WTC11 (cell line): ENCODE measurements at regions of chr11 and their contacts with region 1.

Region 1: DNA sequence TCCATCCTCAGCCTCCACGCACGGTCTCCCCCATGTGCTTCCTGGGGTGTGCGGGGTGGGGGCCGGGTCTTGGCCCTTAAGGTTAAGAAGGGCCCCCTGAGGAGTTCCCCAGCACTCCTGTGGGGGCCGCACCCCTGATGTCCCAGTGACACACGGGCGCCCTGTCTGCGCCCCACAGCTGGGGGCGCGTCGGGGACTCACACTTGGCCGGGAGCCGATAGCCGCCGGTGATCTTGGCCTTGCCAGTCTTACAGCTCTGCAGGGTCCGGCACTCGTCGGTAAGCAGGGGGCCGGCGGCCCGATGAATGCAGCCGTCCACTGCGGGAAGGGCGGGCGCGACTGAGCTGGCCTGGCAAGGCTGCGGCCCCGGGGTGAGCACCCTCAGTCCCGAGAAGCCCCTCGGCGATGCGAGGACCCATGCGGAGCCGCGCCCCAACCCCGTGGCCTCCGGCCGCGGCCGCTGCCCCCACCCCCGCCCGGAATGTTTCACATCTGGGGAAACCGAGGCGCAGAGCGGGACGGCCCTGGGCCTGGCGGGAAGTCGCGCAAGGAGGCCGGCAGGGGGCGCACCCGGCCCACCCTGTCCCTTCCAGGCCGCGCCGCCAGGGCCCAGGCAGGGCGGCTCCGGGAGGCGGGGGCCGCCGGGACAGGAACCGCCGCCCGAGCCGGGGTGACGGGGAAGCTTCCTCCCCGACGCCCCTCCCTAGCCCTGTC is 13.9 kb downstream of the OTUB1 start:
- DNase-seq: peak; percentile 76
- ATAC-seq: peak; percentile 34
- H3K4me3 Mint-ChIP-seq: peak overlapping the region; percentile 64
- H3K27ac Mint-ChIP-seq: no peak overlapping the region
- H3K4me1 Mint-ChIP-seq: peaks cover 11% of the 10 kb centered on the region
- H3K27me3 Mint-ChIP-seq: peaks cover 42% of the 10 kb centered on the region
- CTCF ChIP-seq: peak; percentile 64

Region 2: DNA sequence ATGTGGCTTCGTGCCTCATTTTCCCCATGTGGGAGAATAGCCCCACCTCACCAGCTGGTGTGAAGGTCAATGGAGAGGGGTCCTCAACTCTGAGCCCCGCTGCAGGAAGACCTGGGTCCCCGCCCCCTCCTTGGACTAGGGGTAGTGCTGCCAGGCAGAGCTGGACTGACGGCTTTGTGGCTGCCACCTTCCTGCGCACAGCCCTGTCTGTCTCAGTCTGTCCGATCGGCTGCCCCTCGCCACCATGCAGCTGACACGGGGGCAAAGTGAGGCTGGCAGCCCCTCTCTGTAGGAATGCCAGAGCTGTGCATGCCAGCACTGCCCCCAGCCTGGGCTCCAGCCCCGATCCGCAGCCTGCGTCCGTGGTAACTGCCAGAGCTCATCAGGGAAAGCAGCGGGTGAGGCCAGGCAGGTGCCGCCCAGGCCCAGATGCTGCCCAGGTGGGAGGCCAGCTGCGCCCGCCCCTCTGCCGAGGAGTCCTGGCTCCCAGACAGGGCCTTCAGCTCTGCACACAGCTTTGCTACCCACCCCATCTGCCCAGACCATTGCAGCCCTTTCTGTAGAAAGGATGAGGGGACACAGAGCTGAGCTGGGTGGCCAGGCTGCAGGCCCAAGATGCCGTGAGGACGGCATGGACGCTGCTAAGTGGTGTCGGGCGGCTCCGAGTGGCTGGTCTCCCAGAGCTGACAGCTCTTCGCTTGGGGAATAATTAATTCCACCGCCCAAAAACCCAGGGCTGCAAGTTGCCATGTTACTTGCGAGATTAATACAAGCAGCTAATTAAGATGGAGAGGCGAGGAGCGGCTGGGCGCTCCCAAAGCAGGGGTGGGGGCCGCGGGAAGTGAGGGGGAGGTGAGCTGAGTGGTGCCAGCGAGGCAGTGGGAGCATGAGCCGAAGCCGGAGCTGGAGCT is 16.0 kb after region 1 on chr11:
- CTCF ChIA-PET with region 1: interaction called, 75 read pairs
- POLR2A ChIA-PET with region 1: interaction called, 3 read pairs
- DNase-seq: no peak
- ATAC-seq: no peak
- H3K4me3 Mint-ChIP-seq: no peak overlapping the region
- H3K27ac Mint-ChIP-seq: no peak overlapping the region
- H3K4me1 Mint-ChIP-seq: peaks cover 16% of the 10 kb centered on the region
- H3K27me3 Mint-ChIP-seq: peaks cover 76% of the 10 kb centered on the region
- CTCF ChIP-seq: no peak

Region 3: GRCh38 chr11:64028398-64029115 is 28.4 kb after region 1 on chr11:
- CTCF ChIA-PET with region 1: interaction called, 75 read pairs
- POLR2A ChIA-PET with region 1: interaction called, 7 read pairs
- DNase-seq: peak; percentile 87
- ATAC-seq: peak; percentile 70
- H3K4me3 Mint-ChIP-seq: no peak overlapping the region
- H3K27ac Mint-ChIP-seq: no peak overlapping the region
- H3K4me1 Mint-ChIP-seq: peaks cover 53% of the 10 kb centered on the region
- H3K27me3 Mint-ChIP-seq: peaks cover 69% of the 10 kb centered on the region
- CTCF ChIP-seq: no peak

Region 4: DNA sequence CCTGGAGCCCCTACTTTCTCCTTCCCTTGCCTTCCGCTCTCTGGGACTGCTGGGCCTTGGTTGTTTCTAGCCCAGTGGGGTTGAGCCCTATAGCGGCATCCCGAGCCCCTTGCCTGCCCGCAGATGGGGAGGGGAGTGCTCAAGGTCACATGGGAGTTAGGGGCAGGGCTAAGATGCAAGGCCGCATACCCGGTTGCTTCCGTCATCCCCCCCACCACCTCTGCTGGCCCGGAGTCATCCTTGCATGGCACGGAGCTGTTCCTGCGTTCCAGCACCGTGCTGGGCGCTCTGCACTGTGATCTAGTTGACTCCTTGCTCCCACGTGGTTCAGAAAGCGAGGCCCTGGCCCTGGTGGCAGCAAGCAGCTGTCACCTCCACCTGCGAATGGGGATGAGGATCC is 53.5 kb after region 1 on chr11:
- CTCF ChIA-PET with region 1: interaction called, 12 read pairs
- POLR2A ChIA-PET with region 1: no interaction called
- DNase-seq: peak; percentile 74
- ATAC-seq: peak; percentile 91
- H3K4me3 Mint-ChIP-seq: no peak overlapping the region
- H3K27ac Mint-ChIP-seq: peak overlapping the region; percentile 41; the same call in 1 of the 2 replicates
- H3K4me1 Mint-ChIP-seq: peaks cover 29% of the 10 kb centered on the region
- H3K27me3 Mint-ChIP-seq: peaks cover 91% of the 10 kb centered on the region
- CTCF ChIP-seq: no peak

Region 5: DNA sequence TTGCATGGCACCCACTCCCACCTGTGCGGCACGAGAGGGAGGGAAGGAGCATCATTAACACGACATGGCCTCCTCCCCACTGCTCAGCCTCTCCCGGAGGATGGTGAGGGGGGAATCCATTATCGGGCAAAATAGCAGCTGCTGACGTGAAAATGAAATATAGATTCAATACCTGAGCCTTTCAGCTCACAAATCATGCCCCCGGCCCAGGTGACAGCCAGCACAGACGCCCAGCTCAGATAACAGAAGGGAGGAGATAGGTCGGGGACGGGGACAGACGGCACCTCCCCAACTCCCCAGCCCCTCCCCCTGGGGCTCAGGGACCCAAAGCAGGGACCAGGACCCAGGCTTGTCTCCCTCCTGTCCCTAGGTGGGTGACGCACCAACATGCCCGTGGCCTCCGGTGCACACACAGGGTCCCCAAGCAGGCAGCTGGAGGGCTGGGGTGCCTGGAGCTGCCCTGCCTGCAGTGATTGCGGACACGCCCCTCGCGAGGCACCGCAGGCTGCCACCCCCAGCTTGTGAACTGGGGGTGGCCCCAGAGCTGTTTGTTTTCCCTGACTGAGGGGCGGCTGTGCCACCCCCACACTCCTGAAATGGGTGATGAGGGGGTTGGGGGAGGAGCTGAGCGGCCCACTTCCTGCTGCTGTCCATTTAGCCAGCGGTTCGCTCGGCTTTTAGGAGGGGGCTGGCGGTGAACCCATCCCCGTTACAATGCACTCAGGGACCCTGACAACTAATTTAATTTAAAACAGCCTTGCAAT is 67.2 kb after region 1 on chr11:
- CTCF ChIA-PET with region 1: interaction called, 13 read pairs
- POLR2A ChIA-PET with region 1: no interaction called
- DNase-seq: no peak
- ATAC-seq: peak; percentile 16; the same call in 1 of the 2 replicates
- H3K4me3 Mint-ChIP-seq: no peak overlapping the region
- H3K27ac Mint-ChIP-seq: no peak overlapping the region
- H3K4me1 Mint-ChIP-seq: peaks cover 12% of the 10 kb centered on the region; the same call in 1 of the 2 replicates
- H3K27me3 Mint-ChIP-seq: peaks cover 83% of the 10 kb centered on the region
- CTCF ChIP-seq: no peak

Region 6: DNA sequence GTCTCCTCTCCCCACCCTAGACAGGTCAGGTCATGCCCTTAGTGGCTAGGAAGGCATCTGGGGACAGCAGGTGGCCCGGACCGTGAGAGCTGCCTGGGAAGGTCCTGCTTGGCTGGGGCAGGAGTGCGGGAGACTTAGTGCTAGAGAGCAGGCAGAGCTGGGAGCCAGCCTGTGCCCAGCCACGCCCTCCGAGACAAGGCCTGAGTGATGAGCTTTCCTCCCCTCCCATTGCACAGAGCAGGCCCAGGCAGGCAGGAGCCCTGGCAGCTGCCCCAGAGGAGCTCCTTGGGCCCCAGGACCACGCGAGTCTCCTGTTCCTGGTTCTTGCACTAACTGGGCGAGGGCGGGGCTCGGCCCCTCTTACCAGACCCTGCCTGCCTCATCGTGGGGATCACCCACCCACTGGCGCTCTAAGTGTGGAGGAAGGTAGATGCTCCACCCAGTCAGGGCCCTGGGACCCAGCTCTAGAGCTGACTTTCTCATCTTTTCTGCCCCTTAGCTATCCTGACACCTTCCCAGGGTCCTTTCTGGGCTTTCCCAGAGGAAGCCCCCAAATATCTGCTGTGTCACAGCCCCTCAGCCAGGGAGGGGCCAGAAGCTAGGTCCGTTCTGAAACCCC is 120.9 kb after region 1 on chr11:
- CTCF ChIA-PET with region 1: interaction called, 10 read pairs
- POLR2A ChIA-PET with region 1: no interaction called
- DNase-seq: no peak
- ATAC-seq: no peak; the same call in 1 of the 2 replicates
- H3K4me3 Mint-ChIP-seq: no peak overlapping the region
- H3K27ac Mint-ChIP-seq: peak overlapping the region; percentile 60; the same call in 1 of the 2 replicates
- H3K4me1 Mint-ChIP-seq: peaks cover 38% of the 10 kb centered on the region
- H3K27me3 Mint-ChIP-seq: peaks cover 60% of the 10 kb centered on the region
- CTCF ChIP-seq: no peak

Region 7: GRCh38 chr11:64165849-64166635 is 165.9 kb after region 1 on chr11 and contains the start of gene MACROD1:
- CTCF ChIA-PET with region 1: interaction called, 10 read pairs
- POLR2A ChIA-PET with region 1: interaction called, 8 read pairs
- DNase-seq: peak; percentile 80
- ATAC-seq: peak; percentile 77
- H3K4me3 Mint-ChIP-seq: peak within 1 kb of the TSS; percentile 74
- H3K27ac Mint-ChIP-seq: peak within 1 kb of the TSS; percentile 86
- H3K4me1 Mint-ChIP-seq: peaks cover 22% of the 10 kb centered on the region
- H3K27me3 Mint-ChIP-seq: no peaks in the 10 kb centered on the region
- CTCF ChIP-seq: no peak
- total RNA-seq, gene MACROD1: 36.9 to 54.4 TPM (median 52.9 TPM) in 3 replicates